ENCODE measurements at regions of chr20 and their contacts with region 1.

Region 1: DNA sequence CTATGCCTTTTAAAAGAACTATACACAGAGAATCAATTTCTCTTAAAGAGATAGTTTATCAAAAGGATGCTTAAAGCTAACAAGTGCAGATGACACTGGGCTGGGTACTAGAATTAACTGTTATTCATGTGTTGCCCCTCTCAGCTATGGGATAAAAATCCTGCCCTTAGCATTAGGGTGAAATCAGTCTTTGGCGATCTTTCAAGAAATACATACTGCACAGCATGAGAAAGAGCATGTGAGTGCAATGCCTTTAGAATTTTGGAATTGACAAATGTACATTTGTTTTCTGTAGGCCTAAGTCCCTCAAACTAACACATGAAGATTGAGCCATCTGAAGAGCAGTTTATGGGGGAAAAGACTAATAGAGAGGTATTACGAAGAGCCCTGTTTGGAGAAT is 115.4 kb downstream of the ZFP64 start:
- DNase-seq: no peak
- ATAC-seq: no peak
- H3K4me3 ChIP-seq: no peak overlapping the region
- H3K4me3 Mint-ChIP-seq: no peak overlapping the region
- H3K27ac ChIP-seq: no peak overlapping the region
- H3K27ac Mint-ChIP-seq: no peak overlapping the region
- H3K4me1 ChIP-seq: no peaks in the 10 kb centered on the region
- H3K4me1 Mint-ChIP-seq: no peaks in the 10 kb centered on the region
- H3K27me3 ChIP-seq: no peaks in the 10 kb centered on the region
- H3K27me3 Mint-ChIP-seq: no peaks in the 10 kb centered on the region

Region 2: GRCh38 chr20:52062452-52063209 is 13.5 kb before region 1 on chr20:
- CTCF ChIA-PET with region 1: no interaction called
- POLR2A ChIA-PET with region 1: interaction called in 1 of 2 experiments, 10 read pairs
- DNase-seq: no peak
- ATAC-seq: no peak
- H3K4me3 ChIP-seq: no peak overlapping the region
- H3K4me3 Mint-ChIP-seq: no peak overlapping the region
- H3K27ac ChIP-seq: no peak overlapping the region
- H3K27ac Mint-ChIP-seq: no peak overlapping the region
- H3K4me1 ChIP-seq: no peaks in the 10 kb centered on the region
- H3K4me1 Mint-ChIP-seq: no peaks in the 10 kb centered on the region
- H3K27me3 ChIP-seq: no peaks in the 10 kb centered on the region
- H3K27me3 Mint-ChIP-seq: peaks cover 0 to 3% of the 10 kb centered on the region in 2 donors

Measured in T-cell (primary cell).